AG04450 (cell line): ENCODE measurements at regions of chr15 and their contacts with region 1.

Region 1: DNA sequence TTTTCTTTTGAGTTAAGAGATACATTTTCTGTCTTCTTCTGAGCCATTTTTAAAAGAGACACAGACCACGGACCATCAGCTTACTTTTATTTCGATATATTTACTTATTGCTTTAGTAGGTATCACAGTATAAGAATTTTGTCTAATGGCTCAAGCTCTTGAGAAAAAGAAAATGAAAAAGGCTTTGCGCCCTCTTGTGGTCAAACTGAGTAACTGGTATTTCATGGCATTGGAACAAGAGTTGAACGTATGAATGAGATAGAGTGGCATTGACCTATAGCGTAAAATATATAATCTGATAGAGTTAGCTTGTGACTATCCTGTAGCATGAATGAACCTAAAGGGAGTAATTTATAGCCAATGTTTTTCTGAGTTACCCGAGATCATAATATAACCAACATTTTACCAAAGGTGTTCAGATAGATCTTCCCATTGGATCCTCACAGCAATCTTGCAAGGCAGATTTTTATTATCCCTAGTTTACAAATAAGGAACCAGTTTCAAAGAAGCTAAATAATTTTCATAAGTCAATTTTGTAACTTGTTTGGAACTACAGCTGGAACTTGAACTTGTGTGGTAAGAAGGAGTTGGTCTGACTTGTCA is 154.6 kb downstream of the POLR2M start:
- DNase-seq: peak; percentile 44
- H3K4me3 ChIP-seq: no peak overlapping the region
- H3K27ac ChIP-seq: no peak overlapping the region
- H3K27me3 ChIP-seq: no peaks in the 10 kb centered on the region
- CTCF ChIP-seq: peak; percentile 84

Region 2: GRCh38 chr15:57395292-57395691 is 465.8 kb before region 1 on chr15:
- CTCF ChIA-PET with region 1: no interaction called
- POLR2A ChIA-PET with region 1: no interaction called
- DNase-seq: no peak
- H3K4me3 ChIP-seq: no peak overlapping the region
- H3K27ac ChIP-seq: no peak overlapping the region
- H3K27me3 ChIP-seq: peaks cover 8% of the 10 kb centered on the region
- CTCF ChIP-seq: no peak

Region 3: GRCh38 chr15:57611938-57612337 is 249.2 kb before region 1 on chr15:
- CTCF ChIA-PET with region 1: no interaction called
- POLR2A ChIA-PET with region 1: no interaction called
- DNase-seq: no peak
- H3K4me3 ChIP-seq: no peak overlapping the region
- H3K27ac ChIP-seq: no peak overlapping the region
- H3K27me3 ChIP-seq: no peaks in the 10 kb centered on the region
- CTCF ChIP-seq: no peak; the same call in 1 of the 2 replicates

Region 4: GRCh38 chr15:57662091-57662744 is 198.9 kb before region 1 on chr15:
- CTCF ChIA-PET with region 1: interaction called, 99 read pairs
- POLR2A ChIA-PET with region 1: no interaction called
- DNase-seq: no peak
- H3K4me3 ChIP-seq: no peak overlapping the region
- H3K27ac ChIP-seq: no peak overlapping the region
- H3K27me3 ChIP-seq: peaks cover 16% of the 10 kb centered on the region
- CTCF ChIP-seq: no peak

Region 5: DNA sequence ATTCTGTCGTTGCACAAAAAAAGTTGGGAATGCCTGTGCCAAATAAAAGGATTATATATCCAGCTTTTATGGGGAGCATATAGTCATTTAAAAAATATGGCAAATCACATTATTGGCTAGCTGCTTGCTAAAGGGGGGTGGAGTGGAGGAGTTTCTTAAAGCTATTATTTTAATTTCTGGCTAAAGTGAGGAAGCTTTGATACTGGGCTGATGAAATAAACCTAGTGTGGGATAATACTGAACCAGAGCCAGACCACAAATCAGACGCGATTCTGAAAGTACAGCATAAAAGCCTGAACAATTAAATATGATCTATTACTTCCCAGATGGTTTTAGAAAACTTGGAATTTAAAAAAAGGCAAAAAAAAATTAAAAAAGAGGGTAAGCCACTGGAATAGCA is 140.3 kb before region 1 on chr15:
- CTCF ChIA-PET with region 1: interaction called, 10 read pairs
- POLR2A ChIA-PET with region 1: no interaction called
- DNase-seq: no peak
- H3K4me3 ChIP-seq: no peak overlapping the region
- H3K27ac ChIP-seq: no peak overlapping the region
- H3K27me3 ChIP-seq: no peaks in the 10 kb centered on the region
- CTCF ChIP-seq: no peak

Region 6: GRCh38 chr15:57751177-57751800 is 109.8 kb before region 1 on chr15:
- CTCF ChIA-PET with region 1: interaction called, 181 read pairs
- POLR2A ChIA-PET with region 1: no interaction called
- DNase-seq: peak; percentile 13
- H3K4me3 ChIP-seq: no peak overlapping the region
- H3K27ac ChIP-seq: no peak overlapping the region
- H3K27me3 ChIP-seq: peaks cover 11% of the 10 kb centered on the region
- CTCF ChIP-seq: peak; percentile 65

Region 7: GRCh38 chr15:57872281-57873030 is 11.3 kb after region 1 on chr15:
- CTCF ChIA-PET with region 1: interaction called, 56 read pairs
- POLR2A ChIA-PET with region 1: no interaction called
- DNase-seq: no peak
- H3K4me3 ChIP-seq: no peak overlapping the region
- H3K27ac ChIP-seq: no peak overlapping the region
- H3K27me3 ChIP-seq: no peaks in the 10 kb centered on the region
- CTCF ChIP-seq: no peak

Region 8: GRCh38 chr15:57947781-57948180 is 86.6 kb after region 1 on chr15:
- CTCF ChIA-PET with region 1: no interaction called
- POLR2A ChIA-PET with region 1: no interaction called
- DNase-seq: no peak
- H3K4me3 ChIP-seq: no peak overlapping the region
- H3K27ac ChIP-seq: no peak overlapping the region
- H3K27me3 ChIP-seq: peaks cover 2% of the 10 kb centered on the region
- CTCF ChIP-seq: no peak

Region 9: DNA sequence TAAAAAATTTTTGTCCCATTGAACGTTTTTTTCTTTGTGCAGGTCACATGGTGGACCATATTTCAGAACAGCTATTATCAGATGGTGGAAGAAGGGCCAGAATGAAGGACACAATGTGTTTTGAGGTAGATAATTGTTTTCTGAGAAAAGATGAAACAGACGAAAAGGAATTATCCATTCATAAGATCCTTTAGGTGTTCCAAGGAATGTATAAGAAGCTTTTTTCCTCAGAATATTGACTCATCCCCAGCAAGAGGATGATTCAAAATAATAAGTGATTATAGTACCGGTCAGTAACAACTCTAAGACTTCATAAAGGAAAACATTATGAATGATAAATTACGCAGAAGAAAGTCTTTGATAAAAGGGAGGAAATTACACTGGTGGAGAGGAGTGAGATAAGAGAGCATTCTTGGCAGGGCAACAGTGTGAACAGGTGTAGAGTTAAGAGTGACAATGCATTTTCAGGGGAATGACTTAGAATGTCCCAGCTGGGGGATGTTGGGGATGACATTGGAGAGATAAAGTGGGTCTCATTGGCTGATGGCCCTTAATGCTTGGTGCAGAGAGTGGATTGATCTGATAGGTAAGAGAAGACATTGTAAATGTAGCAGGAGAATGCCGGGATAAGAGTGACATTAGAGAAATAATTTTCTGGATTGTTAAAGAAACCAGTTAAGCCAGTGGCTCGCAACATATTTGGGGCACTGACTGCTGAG is 250.0 kb after region 1 on chr15:
- CTCF ChIA-PET with region 1: no interaction called
- POLR2A ChIA-PET with region 1: no interaction called
- DNase-seq: no peak
- H3K4me3 ChIP-seq: no peak overlapping the region
- H3K27ac ChIP-seq: no peak overlapping the region
- H3K27me3 ChIP-seq: no peaks in the 10 kb centered on the region
- CTCF ChIP-seq: no peak

Region 10: GRCh38 chr15:58182460-58183163 is 321.5 kb after region 1 on chr15:
- CTCF ChIA-PET with region 1: interaction called, 17 read pairs
- POLR2A ChIA-PET with region 1: no interaction called
- DNase-seq: peak; percentile 20
- H3K4me3 ChIP-seq: no peak overlapping the region
- H3K27ac ChIP-seq: no peak overlapping the region
- H3K27me3 ChIP-seq: peaks cover 22% of the 10 kb centered on the region
- CTCF ChIP-seq: peak; percentile 87